ENCODE measurements at regions of chr2 and their contacts with region 1.

Region 1: DNA sequence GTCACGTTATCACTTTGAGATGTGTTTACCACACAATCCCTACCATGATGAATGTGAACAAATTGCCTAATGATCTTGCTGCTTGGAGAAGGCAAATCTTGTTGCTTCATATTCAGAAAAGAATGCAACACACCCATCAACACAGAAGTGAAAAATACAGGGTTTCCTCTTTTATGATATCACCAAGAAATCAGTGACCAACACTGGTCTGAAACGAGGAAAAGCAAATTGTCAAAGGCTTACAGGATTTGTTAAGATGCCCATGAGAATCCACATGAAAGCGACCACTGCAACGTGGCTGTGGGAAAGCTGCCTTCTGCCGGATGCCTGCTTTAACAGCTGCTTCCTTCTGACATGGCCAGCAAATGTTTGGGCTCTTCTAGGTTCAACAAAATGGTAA is 397.6 kb upstream of the LRATD1 start:
- DNase-seq: no peak
- H3K4me3 ChIP-seq: no peak overlapping the region
- CTCF ChIP-seq: no peak

Region 2: GRCh38 chr2:14148216-14148615 is 86.7 kb before region 1 on chr2:
- in situ Hi-C with region 1: loop called (anchors 10 kb)
- DNase-seq: no peak
- H3K4me3 ChIP-seq: no peak overlapping the region
- CTCF ChIP-seq: no peak

Region 3: DNA sequence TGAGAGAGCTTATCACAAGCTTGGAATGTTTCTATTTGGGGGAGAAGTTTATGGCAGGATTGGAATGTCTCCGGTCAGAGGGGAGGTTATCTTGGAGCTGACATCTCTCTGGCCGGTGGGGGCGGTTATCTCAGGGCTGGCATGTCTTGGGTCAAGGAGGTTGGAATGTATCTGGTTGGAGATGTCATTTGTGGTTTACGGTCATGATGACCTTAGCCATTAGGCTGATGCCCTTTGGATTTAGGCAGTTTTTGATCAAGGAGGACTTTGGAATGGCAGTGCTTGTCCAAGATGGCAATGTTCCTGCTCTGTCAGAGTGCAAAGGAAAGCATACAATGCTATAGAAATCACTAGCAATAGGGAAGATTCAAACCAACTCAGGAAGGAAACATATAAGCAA is 35.2 kb after region 1 on chr2:
- in situ Hi-C with region 1: no loop called
- DNase-seq: no peak
- H3K4me3 ChIP-seq: no peak overlapping the region
- CTCF ChIP-seq: no peak

Region 4: DNA sequence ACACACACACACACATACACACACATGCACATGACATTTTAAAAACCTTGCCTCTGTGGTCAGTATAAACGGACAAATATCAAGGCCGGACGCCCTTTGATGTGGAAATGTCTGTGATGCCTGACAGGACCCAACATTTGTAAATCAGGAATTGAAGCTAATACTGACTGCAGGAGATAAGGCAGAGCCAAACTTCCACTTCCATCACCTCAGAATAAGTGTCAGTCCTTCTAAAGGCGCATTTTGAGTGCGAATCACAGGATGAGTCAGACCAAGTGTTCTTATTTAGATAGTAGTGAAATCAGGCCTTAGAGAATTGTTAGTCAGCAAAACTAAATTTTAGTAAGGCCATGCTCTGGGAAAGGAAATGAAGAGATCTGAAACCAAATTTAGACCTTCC is 185.9 kb after region 1 on chr2:
- in situ Hi-C with region 1: no loop called
- DNase-seq: no peak
- H3K4me3 ChIP-seq: no peak overlapping the region
- CTCF ChIP-seq: no peak